ENCODE measurements at regions of chr1 and their contacts with region 1.

Region 1: DNA sequence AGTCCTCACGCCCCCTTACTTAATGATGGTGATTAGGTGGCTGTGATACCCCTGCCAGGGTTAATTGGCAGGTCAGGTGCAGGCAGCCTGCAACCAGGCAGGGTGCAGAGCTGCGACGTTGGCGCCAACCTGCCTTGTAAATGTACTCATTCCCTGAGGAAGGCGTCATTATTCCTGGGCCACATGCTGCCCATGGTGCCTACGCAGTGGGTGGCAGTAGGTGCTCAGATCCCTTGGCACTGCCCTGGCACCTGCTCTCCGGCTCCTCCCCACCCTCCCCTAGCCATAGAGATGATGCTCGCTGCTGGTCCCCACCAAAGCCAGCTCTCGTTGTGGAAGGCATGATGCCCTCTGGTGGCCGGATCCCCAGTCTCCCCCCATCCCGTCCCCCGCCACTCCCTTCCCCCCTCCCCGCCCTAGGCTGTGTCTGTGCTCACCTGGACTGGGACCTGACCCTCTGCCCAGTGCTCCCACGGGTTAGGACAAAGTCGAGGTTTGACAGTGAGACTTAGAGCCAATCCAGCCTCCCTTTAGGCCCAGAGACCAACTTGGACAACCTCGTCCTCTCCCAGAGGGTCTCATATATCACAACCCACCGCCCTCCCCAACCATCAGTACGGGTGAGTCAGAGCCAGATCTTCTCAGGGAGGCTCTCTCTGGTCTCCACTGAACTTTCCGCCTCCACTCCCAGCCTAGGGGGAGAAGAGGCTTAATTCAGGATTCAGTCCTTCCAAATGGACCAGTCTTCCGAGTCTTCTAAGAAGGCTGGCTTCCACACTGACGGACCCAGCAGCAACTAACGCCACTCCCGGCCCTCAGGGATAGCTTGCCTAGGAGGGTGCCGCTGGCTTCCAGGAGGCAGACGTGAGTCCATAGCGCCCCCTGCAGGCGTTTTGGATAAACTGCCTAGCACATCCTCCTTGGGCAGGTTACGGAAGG is 5.7 kb downstream of the KRTCAP2 start:
- DNase-seq: peak; percentile 89
- H3K4me3 ChIP-seq: peak overlapping the region; percentile 17 to 36; a peak in 2 of 4 replicates
- H3K27ac ChIP-seq: peak overlapping the region in 1 of 2 experiments; percentile 2; a peak in 2 of 4 replicates
- H3K4me1 ChIP-seq: peaks cover 0 to 12% of the 10 kb centered on the region in 2 experiments; a peak in 3 of 4 replicates
- H3K27me3 ChIP-seq: no peaks in the 10 kb centered on the region
- CTCF ChIP-seq: peak; percentile 96
- EP300 ChIP-seq: no peak
- RAD21 ChIP-seq: peak; percentile 95

Region 2: DNA sequence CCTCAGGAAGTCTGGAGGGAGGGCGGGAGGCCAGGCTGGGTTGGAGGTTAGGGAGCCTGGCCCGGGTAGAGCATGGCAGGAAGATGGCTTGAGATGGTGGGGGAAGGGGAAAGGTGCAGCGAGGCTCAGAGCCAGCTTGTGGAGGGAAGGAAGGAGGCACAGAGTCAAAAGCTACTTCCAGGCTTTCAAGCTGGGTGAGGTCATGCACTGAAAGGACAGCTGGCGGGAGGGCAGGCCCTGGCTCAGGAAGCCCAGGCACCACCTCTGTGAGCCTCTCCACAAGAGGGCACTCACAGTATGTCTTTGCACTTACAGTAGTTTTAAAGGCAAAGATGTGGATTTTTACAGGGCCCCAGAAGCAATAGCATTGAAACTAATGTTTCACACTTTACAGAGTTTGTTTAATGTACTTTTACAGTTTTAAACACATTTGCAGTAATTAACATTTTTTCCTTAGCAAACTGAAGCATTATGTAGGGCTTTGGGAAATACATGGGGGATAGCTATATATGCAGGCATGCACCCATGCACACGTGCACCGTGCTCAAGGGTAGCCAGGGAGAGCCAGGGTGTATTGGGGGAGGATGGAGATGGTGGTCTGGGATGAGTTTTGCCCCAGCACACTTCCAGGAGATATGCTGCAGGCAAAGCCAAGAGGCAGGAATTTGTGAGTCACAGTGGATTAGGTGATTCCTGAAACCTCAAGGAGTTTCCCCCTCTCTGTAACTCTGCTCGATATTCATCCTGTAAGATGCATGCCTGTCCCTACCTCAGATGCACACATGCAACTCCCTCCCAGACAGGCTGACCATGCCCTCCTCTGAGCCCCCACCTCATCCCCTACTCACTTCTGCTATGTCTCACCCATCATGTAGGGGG is 122.4 kb before region 1 on chr1:
- CTCF ChIA-PET with region 1: interaction called, 15 read pairs
- POLR2A ChIA-PET with region 1: no interaction called
- DNase-seq: peak; percentile 84
- H3K4me3 ChIP-seq: no peak overlapping the region
- H3K27ac ChIP-seq: no peak overlapping the region; a peak in 1 of 4 replicates
- H3K4me1 ChIP-seq: peaks cover 11 to 27% of the 10 kb centered on the region in 2 experiments; a peak in 3 of 4 replicates
- H3K27me3 ChIP-seq: no peaks in the 10 kb centered on the region
- CTCF ChIP-seq: peak; percentile 81
- EP300 ChIP-seq: no peak
- RAD21 ChIP-seq: peak; percentile 84

Region 3: GRCh38 chr1:155127105-155127964 is 40.1 kb before region 1 on chr1 and contains the start of gene EFNA1:
- CTCF ChIA-PET with region 1: interaction called, 67 read pairs
- POLR2A ChIA-PET with region 1: interaction called, 3 read pairs
- DNase-seq: peak; percentile 84
- H3K4me3 ChIP-seq: peak within 1 kb of the TSS; percentile 63 to 67
- H3K27ac ChIP-seq: peak within 1 kb of the TSS in 1 of 2 experiments; percentile 77; a peak in 2 of 4 replicates
- H3K4me1 ChIP-seq: peaks cover 19 to 45% of the 10 kb centered on the region in 2 experiments
- H3K27me3 ChIP-seq: no peaks in the 10 kb centered on the region
- CTCF ChIP-seq: no peak
- EP300 ChIP-seq: no peak
- RAD21 ChIP-seq: no peak
- polyA plus RNA-seq, gene EFNA1: 14.4 and 15.3 TPM in 2 replicates

Region 4: GRCh38 chr1:155135415-155136028 is 31.9 kb before region 1 on chr1 and contains the start of gene SLC50A1:
- CTCF ChIA-PET with region 1: interaction called, 67 read pairs
- POLR2A ChIA-PET with region 1: interaction called, 5 read pairs
- DNase-seq: peak; percentile 97
- H3K4me3 ChIP-seq: peak within 1 kb of the TSS; percentile 72 to 73
- H3K27ac ChIP-seq: peak within 1 kb of the TSS; percentile 96 to 98
- H3K4me1 ChIP-seq: peaks cover 6 to 38% of the 10 kb centered on the region in 2 experiments; a peak in 3 of 4 replicates
- H3K27me3 ChIP-seq: no peaks in the 10 kb centered on the region
- CTCF ChIP-seq: no peak; the same call in 1 of the 2 replicates
- EP300 ChIP-seq: no peak; a peak in 1 of 4 replicates
- RAD21 ChIP-seq: no peak
- polyA plus RNA-seq, gene SLC50A1: 58.4 and 71.1 TPM in 2 replicates

Region 5: GRCh38 chr1:155145491-155145890 is 21.9 kb before region 1 on chr1:
- CTCF ChIA-PET with region 1: interaction called, 67 read pairs
- POLR2A ChIA-PET with region 1: interaction called, 3 read pairs
- DNase-seq: no peak
- H3K4me3 ChIP-seq: no peak overlapping the region
- H3K27ac ChIP-seq: no peak overlapping the region
- H3K4me1 ChIP-seq: no peaks in the 10 kb centered on the region; a peak in 1 of 4 replicates
- H3K27me3 ChIP-seq: peaks cover 6% of the 10 kb centered on the region; the same call in 1 of the 2 replicates
- CTCF ChIP-seq: no peak; the same call in 1 of the 2 replicates
- EP300 ChIP-seq: no peak
- RAD21 ChIP-seq: no peak

Region 6: DNA sequence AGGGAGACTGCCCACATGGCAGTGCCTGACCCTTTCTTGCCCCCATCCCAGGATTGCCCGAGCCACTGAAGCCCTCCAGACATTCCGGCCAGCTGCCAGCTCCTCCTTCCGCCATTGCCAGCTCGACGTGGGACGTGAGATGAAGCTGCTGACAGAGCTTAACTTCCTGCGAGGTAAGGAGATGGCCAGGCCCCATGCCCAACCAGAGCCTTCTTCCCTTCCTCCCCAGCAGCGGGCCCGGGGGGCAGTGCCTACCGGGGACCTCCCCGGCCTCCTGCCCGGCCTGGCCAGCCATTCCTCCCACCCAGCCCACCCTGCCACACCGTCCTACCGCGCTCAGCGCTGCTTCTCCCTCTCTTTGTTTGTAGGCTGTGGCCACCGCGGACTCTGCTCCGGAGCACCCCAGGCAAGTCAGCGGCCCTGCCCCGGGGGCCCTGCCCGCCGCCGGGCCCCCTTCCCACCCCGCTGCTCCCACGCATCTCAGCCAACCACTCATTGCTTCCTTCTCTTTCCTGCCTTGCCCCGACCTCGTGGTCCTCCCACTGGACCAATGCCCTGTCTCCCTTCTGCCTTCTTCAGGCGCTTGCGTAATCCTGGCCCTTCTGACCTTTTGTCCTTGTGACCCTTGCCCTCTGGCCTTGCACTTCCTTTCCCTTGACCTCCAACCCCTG is 11.1 kb after region 1 on chr1:
- CTCF ChIA-PET with region 1: interaction called, 10 read pairs
- POLR2A ChIA-PET with region 1: no interaction called
- DNase-seq: no peak
- H3K4me3 ChIP-seq: no peak overlapping the region
- H3K27ac ChIP-seq: no peak overlapping the region
- H3K4me1 ChIP-seq: peaks cover 0 to 24% of the 10 kb centered on the region in 2 experiments; a peak in 2 of 4 replicates
- H3K27me3 ChIP-seq: no peaks in the 10 kb centered on the region
- CTCF ChIP-seq: no peak
- EP300 ChIP-seq: no peak
- RAD21 ChIP-seq: no peak

Region 7: DNA sequence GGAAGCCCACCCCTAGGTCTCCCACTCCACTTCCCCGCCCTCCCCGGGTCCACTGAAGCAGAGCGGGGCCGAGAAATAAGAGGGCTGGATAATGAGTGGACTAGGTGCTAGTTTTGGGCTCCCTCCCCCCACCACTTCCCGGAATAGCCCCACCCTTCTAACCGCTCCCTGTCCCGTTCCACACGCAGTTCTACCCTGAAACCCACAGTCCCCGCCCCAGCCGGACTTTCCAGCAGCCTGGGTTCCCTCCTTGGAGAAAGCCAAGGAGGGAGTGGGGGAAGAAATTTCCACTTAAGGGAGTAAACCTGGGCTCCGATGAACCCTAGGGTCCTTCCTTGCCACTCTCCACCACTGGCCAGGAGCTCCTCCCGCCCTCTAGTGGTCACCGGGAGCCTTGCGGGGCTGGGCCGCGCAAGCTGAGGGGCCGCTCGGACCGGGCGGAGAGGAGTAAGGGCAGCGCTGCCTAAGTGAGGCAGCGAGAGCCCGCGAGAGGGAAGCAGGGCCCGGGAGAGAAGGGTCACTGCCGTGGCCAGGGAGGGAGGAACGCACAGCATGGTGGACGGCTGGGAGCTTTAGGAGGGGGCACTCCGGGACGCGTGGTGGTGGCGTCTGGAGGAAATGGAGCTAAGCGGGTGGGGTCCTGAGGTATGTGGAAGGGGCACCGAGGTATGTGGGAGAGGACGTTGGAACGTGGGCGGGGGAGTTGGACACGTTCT is 26.0 kb after region 1 on chr1:
- CTCF ChIA-PET with region 1: interaction called, 203 read pairs
- POLR2A ChIA-PET with region 1: interaction called, 12 read pairs
- DNase-seq: peak; percentile 94
- H3K4me3 ChIP-seq: peak overlapping the region; percentile 30 to 60
- H3K27ac ChIP-seq: peak overlapping the region; percentile 78 to 86
- H3K4me1 ChIP-seq: peaks cover 0 to 24% of the 10 kb centered on the region in 2 experiments; a peak in 2 of 4 replicates
- H3K27me3 ChIP-seq: no peaks in the 10 kb centered on the region
- CTCF ChIP-seq: peak; percentile 97
- EP300 ChIP-seq: no peak
- RAD21 ChIP-seq: peak; percentile 64

Measured in SK-N-SH (cell line).